ENCODE measurements at regions of chr15 and their contacts with region 1.

Region 1: DNA sequence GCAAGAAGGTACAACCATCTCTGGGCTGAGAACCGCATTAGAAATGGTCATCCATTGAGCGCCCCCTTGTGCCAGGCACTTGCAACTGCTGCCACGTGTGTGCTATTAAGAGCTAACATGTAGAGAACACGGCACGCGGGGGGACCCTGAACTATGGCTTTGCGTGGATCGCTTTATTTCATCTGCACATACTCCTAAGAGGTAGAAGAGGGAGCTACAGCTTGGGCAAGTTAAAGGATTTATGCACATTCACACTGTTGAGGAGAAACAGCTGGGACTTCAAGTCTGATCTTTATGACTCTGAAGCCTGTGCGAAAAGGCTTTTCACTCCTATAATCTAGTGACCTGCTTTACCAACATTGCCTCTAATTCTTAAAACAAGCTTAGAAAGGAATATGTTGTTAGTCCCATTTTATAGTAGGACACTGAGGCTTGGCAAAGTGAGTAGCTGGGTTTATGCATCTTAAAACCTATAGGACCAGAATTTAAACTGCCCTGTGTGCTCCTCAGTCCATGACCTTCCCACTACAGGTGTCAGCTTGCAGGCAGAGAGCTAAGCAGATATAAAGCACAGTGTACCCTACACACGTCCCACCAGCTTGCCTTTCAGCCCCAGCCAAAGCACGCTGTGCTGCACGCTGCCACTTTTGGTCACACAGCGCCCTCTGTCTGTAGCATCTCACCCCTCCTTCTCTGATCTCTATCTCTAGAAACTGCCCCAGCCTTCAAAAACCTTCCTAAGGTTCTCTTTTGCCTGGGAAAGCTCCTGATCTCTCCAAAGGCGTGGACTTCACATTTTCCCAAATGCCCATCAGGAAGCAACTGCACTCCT is 57.8 kb downstream of the STARD5 start:
- DNase-seq: peak; percentile 71 to 75 (median 73)
- H3K4me3 ChIP-seq: peak overlapping the region in 1 of 2 donors; percentile 9
- H3K4me3 Mint-ChIP-seq: peak overlapping the region; percentile 66 to 90 (median 79)
- H3K27ac ChIP-seq: no peak overlapping the region
- H3K27ac Mint-ChIP-seq: peak overlapping the region in 5 of 7 donors; percentile 11 to 65 (median 32)
- H3K4me1 ChIP-seq: peaks cover 12% of the 10 kb centered on the region
- H3K4me1 Mint-ChIP-seq: peaks cover 12 to 16% (median 14%) of the 10 kb centered on the region in 4 donors
- H3K27me3 ChIP-seq: no peaks in the 10 kb centered on the region
- H3K27me3 Mint-ChIP-seq: peaks cover 1 to 4% of the 10 kb centered on the region in 2 donors

Region 2: GRCh38 chr15:80455668-80456442 is 810.3 kb before region 1 on chr15:
- CTCF ChIA-PET with region 1: interaction called, 37 read pairs
- POLR2A ChIA-PET with region 1: no interaction called
- intact Hi-C with region 1: no loop called
- DNase-seq: peak in 4 of 5 donors; percentile 52 to 55 (median 54)
- H3K4me3 ChIP-seq: no peak overlapping the region
- H3K4me3 Mint-ChIP-seq: peak overlapping the region in 1 of 8 donors; percentile 25
- H3K27ac ChIP-seq: no peak overlapping the region
- H3K27ac Mint-ChIP-seq: no peak overlapping the region
- H3K4me1 ChIP-seq: no peaks in the 10 kb centered on the region
- H3K4me1 Mint-ChIP-seq: peaks cover 0 to 6% (median 1%) of the 10 kb centered on the region in 4 donors
- H3K27me3 ChIP-seq: peaks cover 3% of the 10 kb centered on the region
- H3K27me3 Mint-ChIP-seq: peaks cover 8 to 17% of the 10 kb centered on the region in 2 donors

Region 3: GRCh38 chr15:80989518-80990478 is 276.4 kb before region 1 on chr15 and contains the start of gene MESD:
- CTCF ChIA-PET with region 1: interaction called, 45 read pairs
- POLR2A ChIA-PET with region 1: interaction called, 3 read pairs
- intact Hi-C with region 1: no loop called
- DNase-seq: peak; percentile 92 to 95 (median 94)
- H3K4me3 ChIP-seq: peak within 1 kb of the TSS; percentile 54 to 97
- H3K4me3 Mint-ChIP-seq: peak within 1 kb of the TSS; percentile 91 to 99 (median 99)
- H3K27ac ChIP-seq: peak within 1 kb of the TSS; percentile 79
- H3K27ac Mint-ChIP-seq: peak within 1 kb of the TSS; percentile 95 to 99 (median 99)
- H3K4me1 ChIP-seq: peaks cover 60% of the 10 kb centered on the region
- H3K4me1 Mint-ChIP-seq: peaks cover 38 to 71% (median 56%) of the 10 kb centered on the region in 4 donors
- H3K27me3 ChIP-seq: no peaks in the 10 kb centered on the region
- H3K27me3 Mint-ChIP-seq: no peaks in the 10 kb centered on the region
- total RNA-seq, gene MESD: 43.3 to 44.6 TPM

Region 4: DNA sequence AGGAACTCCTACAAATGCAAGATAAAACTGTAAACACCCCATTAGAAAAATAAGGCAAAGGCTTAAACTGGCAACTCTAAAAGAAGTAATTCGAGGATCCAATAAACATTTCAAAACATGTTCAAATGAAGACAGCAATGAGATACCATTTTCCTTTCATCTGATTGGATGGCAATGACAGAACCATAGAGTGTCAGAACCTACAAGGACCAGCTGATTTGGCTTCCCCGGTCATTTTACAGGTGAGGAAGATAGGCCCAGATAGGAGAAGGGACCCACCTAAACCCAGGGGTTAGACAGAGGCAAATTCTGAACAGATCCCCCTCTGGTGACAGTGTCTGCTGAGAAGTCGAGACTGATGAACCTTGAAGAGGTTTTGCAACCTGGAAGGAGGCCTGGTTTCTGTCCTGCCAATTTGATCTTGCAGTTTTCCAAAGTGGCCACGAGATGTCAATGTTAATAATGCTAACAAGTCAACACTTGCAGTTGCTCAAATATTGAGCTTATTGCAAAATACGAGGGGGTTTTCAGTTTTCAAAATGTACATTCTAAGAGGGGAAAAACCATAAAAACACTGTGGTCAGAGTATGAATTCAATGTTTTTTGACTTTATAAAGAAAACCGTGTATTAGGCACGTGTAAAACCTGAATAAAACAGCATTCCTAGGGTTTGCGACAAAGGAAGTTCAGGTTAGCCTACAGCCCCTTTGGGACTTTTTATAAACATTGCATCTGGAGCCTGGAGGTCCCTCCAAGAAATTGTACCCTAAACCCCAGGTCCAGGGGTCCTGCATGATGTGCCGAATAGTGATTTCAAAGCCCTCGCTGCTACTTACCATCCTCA is 110.6 kb before region 1 on chr15:
- CTCF ChIA-PET with region 1: interaction called, 120 read pairs
- POLR2A ChIA-PET with region 1: no interaction called
- intact Hi-C with region 1: loop called (anchors 1 kb)
- DNase-seq: peak in 4 of 5 donors; percentile 8 to 23 (median 14)
- H3K4me3 ChIP-seq: no peak overlapping the region
- H3K4me3 Mint-ChIP-seq: no peak overlapping the region
- H3K27ac ChIP-seq: no peak overlapping the region
- H3K27ac Mint-ChIP-seq: no peak overlapping the region
- H3K4me1 ChIP-seq: no peaks in the 10 kb centered on the region
- H3K4me1 Mint-ChIP-seq: peaks cover 0 to 2% (median 1%) of the 10 kb centered on the region in 4 donors
- H3K27me3 ChIP-seq: no peaks in the 10 kb centered on the region
- H3K27me3 Mint-ChIP-seq: peaks cover 2% of the 10 kb centered on the region in 2 donors

Region 5: GRCh38 chr15:81312790-81313543 is 46.8 kb after region 1 on chr15:
- CTCF ChIA-PET with region 1: interaction called, 15 read pairs
- POLR2A ChIA-PET with region 1: interaction called, 3 read pairs
- intact Hi-C with region 1: no loop called
- DNase-seq: no peak
- H3K4me3 ChIP-seq: no peak overlapping the region
- H3K4me3 Mint-ChIP-seq: no peak overlapping the region
- H3K27ac ChIP-seq: no peak overlapping the region
- H3K27ac Mint-ChIP-seq: peak overlapping the region in 5 of 7 donors; percentile 26 to 97 (median 83)
- H3K4me1 ChIP-seq: peaks cover 54% of the 10 kb centered on the region
- H3K4me1 Mint-ChIP-seq: peaks cover 43 to 77% (median 64%) of the 10 kb centered on the region in 4 donors
- H3K27me3 ChIP-seq: no peaks in the 10 kb centered on the region
- H3K27me3 Mint-ChIP-seq: no peaks in the 10 kb centered on the region

Region 6: DNA sequence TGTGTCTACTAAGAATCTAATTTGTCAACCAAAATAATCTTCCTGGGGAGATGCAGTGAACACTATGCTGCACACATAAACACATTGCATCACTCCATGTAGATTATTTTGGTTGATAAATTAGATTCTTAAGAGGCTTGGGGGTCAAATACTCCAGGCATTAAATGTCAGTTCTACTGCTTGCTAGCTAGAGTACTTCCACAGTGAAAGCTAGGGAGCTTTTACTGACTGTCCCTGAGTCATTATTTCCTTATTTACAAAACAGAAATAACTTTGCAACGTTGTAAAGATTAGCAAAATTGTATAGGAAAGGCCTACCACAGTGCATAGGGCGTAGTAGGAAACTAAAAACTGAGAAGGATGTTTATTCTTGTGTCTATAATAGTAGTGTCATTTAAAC is 120.8 kb after region 1 on chr15:
- CTCF ChIA-PET with region 1: interaction called, 28 read pairs
- POLR2A ChIA-PET with region 1: no interaction called
- intact Hi-C with region 1: no loop called
- DNase-seq: no peak
- H3K4me3 ChIP-seq: no peak overlapping the region
- H3K4me3 Mint-ChIP-seq: no peak overlapping the region
- H3K27ac ChIP-seq: no peak overlapping the region
- H3K27ac Mint-ChIP-seq: no peak overlapping the region
- H3K4me1 ChIP-seq: no peaks in the 10 kb centered on the region
- H3K4me1 Mint-ChIP-seq: peaks cover 2 to 10% (median 8%) of the 10 kb centered on the region in 4 donors
- H3K27me3 ChIP-seq: no peaks in the 10 kb centered on the region
- H3K27me3 Mint-ChIP-seq: peaks cover 0 to 3% of the 10 kb centered on the region in 2 donors

Measured in CD4-positive, alpha-beta memory T cell (primary cell).